Naive thymus-derived CD4-positive, alpha-beta T cell (primary cell): ENCODE measurements at regions of chr4 and their contacts with region 1.

Region 1: DNA sequence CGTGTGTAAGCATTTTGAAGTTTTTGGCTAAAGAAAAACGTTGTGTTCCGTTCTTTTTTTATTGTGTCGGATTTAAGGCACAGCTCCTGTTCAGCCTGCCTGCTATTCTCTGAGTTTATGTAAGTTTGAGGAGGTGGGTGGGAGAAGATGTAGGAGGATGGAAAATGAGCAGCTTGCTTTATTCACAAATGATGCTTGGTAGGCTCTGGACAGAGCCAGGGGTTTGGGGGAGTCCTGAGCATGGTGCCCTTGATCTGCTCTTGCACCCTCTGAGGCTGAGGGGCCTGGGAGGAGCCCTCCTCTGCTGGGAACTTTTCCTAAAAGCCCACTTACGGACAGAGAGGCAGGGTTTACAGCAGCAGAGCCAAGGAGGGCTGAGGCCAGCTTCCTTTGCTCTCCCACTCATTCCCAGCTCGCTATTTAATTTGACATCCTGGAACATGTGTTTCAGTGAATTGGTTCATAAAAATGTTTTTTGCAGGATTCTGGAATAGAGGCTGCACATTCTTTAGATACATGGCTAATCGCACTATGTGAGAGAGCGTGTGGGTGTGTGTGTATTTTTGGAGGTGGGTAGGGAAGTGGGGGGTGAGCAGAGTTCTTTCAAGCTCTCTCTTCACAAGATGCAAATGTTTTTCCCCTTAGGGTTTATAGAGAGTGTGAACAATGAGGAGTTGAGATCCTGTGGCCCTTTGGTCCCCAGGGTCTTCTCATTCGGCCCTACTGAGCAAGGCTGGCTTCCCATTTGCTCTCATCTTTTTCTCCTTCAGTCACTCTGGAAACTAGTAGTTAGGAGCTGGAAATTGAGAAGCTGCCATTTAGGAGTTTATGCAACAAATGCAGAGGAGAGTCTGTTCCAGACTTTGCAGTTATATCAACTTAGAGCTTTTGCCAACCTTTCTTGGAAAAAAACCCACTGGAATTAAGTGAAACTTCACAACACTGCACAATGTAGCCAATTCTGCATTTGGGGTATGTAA is 32.1 kb downstream of the TMEM131L start:
- DNase-seq: peak in 4 of 9 donors; percentile 31 to 46 (median 44)
- ATAC-seq: peak; percentile 60
- H3K4me3 ChIP-seq: peak overlapping the region; percentile 20
- H3K4me3 Mint-ChIP-seq: peak overlapping the region; percentile 74 to 85 (median 80)
- H3K27ac ChIP-seq: peak overlapping the region; percentile 83
- H3K27ac Mint-ChIP-seq: peak overlapping the region; percentile 94 to 100 (median 98)
- H3K4me1 ChIP-seq: peaks cover 37 to 89% of the 10 kb centered on the region in 2 donors
- H3K4me1 Mint-ChIP-seq: peaks cover 72 to 99% (median 91%) of the 10 kb centered on the region in 7 donors
- H3K27me3 ChIP-seq: no peaks in the 10 kb centered on the region
- H3K27me3 Mint-ChIP-seq: no peaks in the 10 kb centered on the region

Region 2: DNA sequence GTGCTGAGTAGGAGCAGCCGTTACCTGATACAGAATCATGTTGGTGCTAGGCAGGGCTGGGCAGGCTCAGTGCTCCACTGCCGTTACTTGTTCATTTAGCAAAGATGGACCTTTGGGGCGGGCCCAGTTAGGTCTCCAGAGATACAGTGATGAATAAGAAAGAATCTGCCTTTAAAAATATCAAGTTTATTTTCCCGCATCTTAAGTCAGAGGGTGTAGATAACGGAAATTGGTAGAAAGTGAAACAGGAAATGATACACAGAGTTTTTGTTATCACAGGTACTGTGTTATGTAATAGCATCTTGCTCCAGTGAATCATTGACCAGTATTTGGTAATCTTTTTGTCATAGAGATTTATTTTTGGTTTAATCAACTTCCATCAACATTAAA is 26.6 kb before region 1 on chr4:
- CTCF ChIA-PET with region 1: interaction called, 5 read pairs
- POLR2A ChIA-PET with region 1: interaction called, 93 read pairs
- intact Hi-C with region 1: loop called (anchors 1 kb)
- DNase-seq: peak in 7 of 9 donors; percentile 46 to 74 (median 65)
- ATAC-seq: peak; percentile 68
- H3K4me3 ChIP-seq: peak overlapping the region; percentile 72
- H3K4me3 Mint-ChIP-seq: peak overlapping the region; percentile 94 to 100 (median 96)
- H3K27ac ChIP-seq: peak overlapping the region; percentile 91
- H3K27ac Mint-ChIP-seq: peak overlapping the region; percentile 93 to 99 (median 98)
- H3K4me1 ChIP-seq: peaks cover 40 to 54% of the 10 kb centered on the region in 2 donors
- H3K4me1 Mint-ChIP-seq: peaks cover 58 to 80% (median 76%) of the 10 kb centered on the region in 7 donors
- H3K27me3 ChIP-seq: no peaks in the 10 kb centered on the region
- H3K27me3 Mint-ChIP-seq: no peaks in the 10 kb centered on the region

Region 3: DNA sequence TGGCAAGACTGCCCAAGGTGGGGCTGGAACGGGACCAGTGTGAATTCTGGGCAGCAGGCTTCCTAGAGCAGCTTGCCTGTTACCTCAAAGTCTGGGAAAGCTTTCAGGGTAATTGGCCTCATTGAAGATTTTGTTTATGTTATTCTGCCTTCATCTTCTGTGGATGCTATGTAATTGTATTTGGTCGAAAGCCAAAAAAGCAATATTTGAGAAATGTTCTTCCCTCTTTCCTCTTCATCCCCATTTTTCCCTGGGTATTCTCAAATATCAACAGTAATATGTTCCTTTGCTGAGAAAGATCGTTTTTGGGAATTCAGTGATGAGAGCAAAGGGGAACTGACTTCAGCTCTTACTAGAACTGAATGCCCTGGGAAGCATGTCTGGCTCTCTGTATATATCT is 19.2 kb before region 1 on chr4:
- CTCF ChIA-PET with region 1: interaction called, 3 read pairs
- POLR2A ChIA-PET with region 1: interaction called, 29 read pairs
- intact Hi-C with region 1: no loop called
- DNase-seq: no peak
- ATAC-seq: no peak
- H3K4me3 ChIP-seq: no peak overlapping the region
- H3K4me3 Mint-ChIP-seq: peak overlapping the region in 7 of 10 donors; percentile 17 to 67 (median 55)
- H3K27ac ChIP-seq: peak overlapping the region; percentile 41
- H3K27ac Mint-ChIP-seq: peak overlapping the region in 8 of 9 donors; percentile 41 to 98 (median 86)
- H3K4me1 ChIP-seq: peaks cover 5 to 60% of the 10 kb centered on the region in 2 donors
- H3K4me1 Mint-ChIP-seq: peaks cover 59 to 95% (median 80%) of the 10 kb centered on the region in 7 donors
- H3K27me3 ChIP-seq: no peaks in the 10 kb centered on the region
- H3K27me3 Mint-ChIP-seq: no peaks in the 10 kb centered on the region

Region 4: GRCh38 chr4:153488006-153488891 is 10.0 kb before region 1 on chr4:
- CTCF ChIA-PET with region 1: interaction called, 4 read pairs
- POLR2A ChIA-PET with region 1: interaction called, 50 read pairs
- intact Hi-C with region 1: loop called (anchors 1 kb)
- DNase-seq: peak; percentile 51 to 87 (median 79)
- ATAC-seq: peak; percentile 81
- H3K4me3 ChIP-seq: peak overlapping the region; percentile 59
- H3K4me3 Mint-ChIP-seq: peak overlapping the region; percentile 79 to 93 (median 84)
- H3K27ac ChIP-seq: peak overlapping the region; percentile 85
- H3K27ac Mint-ChIP-seq: peak overlapping the region; percentile 87 to 99 (median 95)
- H3K4me1 ChIP-seq: peaks cover 57 to 71% of the 10 kb centered on the region in 2 donors
- H3K4me1 Mint-ChIP-seq: peaks cover 68 to 91% (median 81%) of the 10 kb centered on the region in 7 donors
- H3K27me3 ChIP-seq: no peaks in the 10 kb centered on the region
- H3K27me3 Mint-ChIP-seq: no peaks in the 10 kb centered on the region

Region 5: GRCh38 chr4:153528705-153529485 is 30.6 kb after region 1 on chr4:
- CTCF ChIA-PET with region 1: interaction called, 3 read pairs
- POLR2A ChIA-PET with region 1: interaction called, 23 read pairs
- intact Hi-C with region 1: no loop called
- DNase-seq: peak in 5 of 9 donors; percentile 21 to 32 (median 27)
- ATAC-seq: peak; percentile 18
- H3K4me3 ChIP-seq: peak overlapping the region; percentile 24
- H3K4me3 Mint-ChIP-seq: peak overlapping the region; percentile 62 to 89 (median 80)
- H3K27ac ChIP-seq: peak overlapping the region; percentile 68
- H3K27ac Mint-ChIP-seq: peak overlapping the region; percentile 86 to 96 (median 90)
- H3K4me1 ChIP-seq: peaks cover 71 to 94% of the 10 kb centered on the region in 2 donors
- H3K4me1 Mint-ChIP-seq: peaks cover 82 to 99% (median 96%) of the 10 kb centered on the region in 7 donors
- H3K27me3 ChIP-seq: no peaks in the 10 kb centered on the region
- H3K27me3 Mint-ChIP-seq: no peaks in the 10 kb centered on the region

Region 6: GRCh38 chr4:154942176-154942575 is 1443.9 kb after region 1 on chr4:
- CTCF ChIA-PET with region 1: no interaction called
- POLR2A ChIA-PET with region 1: no interaction called
- intact Hi-C with region 1: no loop called
- DNase-seq: no peak
- ATAC-seq: no peak
- H3K4me3 ChIP-seq: no peak overlapping the region
- H3K4me3 Mint-ChIP-seq: no peak overlapping the region
- H3K27ac ChIP-seq: no peak overlapping the region
- H3K27ac Mint-ChIP-seq: no peak overlapping the region
- H3K4me1 ChIP-seq: no peaks in the 10 kb centered on the region
- H3K4me1 Mint-ChIP-seq: no peaks in the 10 kb centered on the region
- H3K27me3 ChIP-seq: no peaks in the 10 kb centered on the region
- H3K27me3 Mint-ChIP-seq: peaks cover 0 to 10% (median 0%) of the 10 kb centered on the region in 5 donors